ENCODE measurements at regions of chr6 and their contacts with region 1.

Region 1: GRCh38 chr6:11692448-11693376 is 85.9 kb downstream of the ADTRP start:
- DNase-seq: no peak
- H3K4me3 ChIP-seq: no peak overlapping the region
- H3K27ac ChIP-seq: no peak overlapping the region
- H3K4me1 ChIP-seq: no peaks in the 10 kb centered on the region
- H3K27me3 ChIP-seq: no peaks in the 10 kb centered on the region
- CTCF ChIP-seq: no peak

Region 2: DNA sequence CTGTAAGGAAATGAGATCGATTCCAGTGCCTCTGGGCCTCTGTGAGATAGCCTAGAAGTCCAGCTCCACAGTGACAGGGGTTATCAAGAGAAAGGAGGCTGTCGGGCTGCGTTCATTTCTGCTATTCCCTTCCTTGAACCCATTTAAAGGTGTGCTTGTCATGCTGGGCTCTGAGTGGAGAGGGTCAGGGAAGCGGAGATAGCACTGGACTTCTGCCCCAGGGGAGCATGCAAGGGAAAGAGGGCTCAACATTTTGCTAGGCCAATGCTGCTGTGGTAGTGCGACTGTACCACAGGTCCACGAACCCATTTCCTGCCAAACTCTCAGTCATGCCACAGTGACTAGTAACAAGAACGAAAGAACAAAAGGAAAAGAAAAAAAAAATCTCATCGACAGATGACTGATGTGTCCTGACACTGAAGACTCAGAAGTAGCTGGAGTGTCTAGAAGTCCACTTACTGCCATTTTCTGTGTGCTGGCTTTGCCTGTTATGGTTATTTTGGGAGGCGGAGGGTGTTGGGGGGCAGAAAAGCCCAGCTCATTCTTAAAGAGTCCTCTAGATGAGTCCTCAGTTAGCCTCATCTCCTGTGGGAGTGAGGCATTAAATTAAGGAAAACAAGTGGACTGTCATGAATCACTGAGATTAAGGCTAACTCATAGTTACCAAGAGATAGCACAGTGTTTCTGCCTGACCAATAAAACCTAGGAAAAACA is 468.3 kb before region 1 on chr6:
- CTCF ChIA-PET with region 1: no interaction called
- dilution Hi-C with region 1: no loop called
- in situ Hi-C with region 1: no loop called
- intact Hi-C with region 1: no loop called
- DNase-seq: no peak
- H3K4me3 ChIP-seq: no peak overlapping the region
- H3K27ac ChIP-seq: no peak overlapping the region
- H3K4me1 ChIP-seq: peaks cover 33% of the 10 kb centered on the region
- H3K27me3 ChIP-seq: no peaks in the 10 kb centered on the region
- CTCF ChIP-seq: no peak

Region 3: DNA sequence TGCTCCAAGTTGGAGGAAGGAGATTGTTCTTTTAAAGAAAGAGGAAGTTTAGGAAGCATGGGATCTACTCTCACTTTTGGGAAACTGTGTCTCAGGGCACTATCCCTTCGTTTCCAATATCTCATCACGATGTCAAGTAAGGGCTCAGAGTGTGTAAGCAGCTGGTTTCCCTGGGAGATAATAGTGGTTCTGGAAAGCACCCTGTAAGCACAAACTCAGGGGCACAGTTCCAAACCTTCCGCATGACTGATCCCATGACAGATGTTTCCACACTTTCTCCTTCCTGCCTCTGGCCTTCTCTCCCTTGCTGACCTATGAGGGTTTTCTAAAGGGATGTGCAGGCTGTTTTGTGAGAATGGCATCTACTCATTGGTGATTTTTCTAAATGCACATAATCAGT is 52.0 kb after region 1 on chr6:
- CTCF ChIA-PET with region 1: no interaction called
- dilution Hi-C with region 1: loop called (anchors 5 kb)
- in situ Hi-C with region 1: no loop called
- intact Hi-C with region 1: no loop called
- DNase-seq: no peak
- H3K4me3 ChIP-seq: no peak overlapping the region
- H3K27ac ChIP-seq: no peak overlapping the region
- H3K4me1 ChIP-seq: no peaks in the 10 kb centered on the region
- H3K27me3 ChIP-seq: no peaks in the 10 kb centered on the region
- CTCF ChIP-seq: no peak